ENCODE measurements at regions of chr1 and their contacts with region 1.

Region 1: DNA sequence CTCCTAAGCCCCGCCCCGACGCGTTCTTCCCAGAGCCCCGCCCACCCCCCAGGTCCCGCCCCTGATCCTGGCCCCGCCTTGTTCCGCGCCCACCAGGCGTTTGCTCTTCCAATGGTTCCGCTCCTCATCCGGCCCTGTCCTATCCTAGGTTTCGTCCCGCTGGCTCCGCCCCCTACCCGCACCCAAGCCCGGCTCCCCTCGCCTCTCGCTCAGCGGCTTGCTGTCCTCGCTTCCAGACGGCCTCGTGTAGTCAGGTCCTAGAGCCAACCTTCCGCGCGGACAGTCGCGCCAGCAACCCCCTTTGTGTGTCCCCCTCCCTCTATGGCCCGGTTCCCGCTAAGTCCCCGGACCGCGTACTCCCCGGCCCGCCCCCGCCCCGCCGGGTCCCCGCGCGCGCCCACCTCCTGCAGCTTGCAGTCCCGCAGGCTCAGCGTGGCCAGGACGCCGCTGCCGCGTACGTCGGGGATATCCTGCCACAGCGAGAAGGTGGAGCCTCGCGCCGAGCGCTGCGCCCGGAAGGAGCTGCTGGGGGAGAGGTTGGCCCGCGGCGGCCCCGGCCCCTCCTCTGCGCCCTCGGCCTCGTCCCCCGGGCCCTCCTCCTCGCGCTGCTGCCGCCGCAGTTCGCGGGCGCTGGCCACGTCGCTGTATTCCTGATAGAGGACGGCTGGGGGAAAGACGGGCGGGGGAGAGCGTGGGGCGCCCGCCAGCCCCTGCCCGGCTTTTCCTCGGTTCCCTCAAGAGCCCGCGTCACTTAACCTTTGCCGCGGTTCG is 5.7 kb downstream of the ARHGEF19 start:
- DNase-seq: peak; percentile 85 to 95 (median 93)
- ATAC-seq: peak; percentile 94
- H3K4me3 ChIP-seq: peak overlapping the region; percentile 74
- H3K4me3 Mint-ChIP-seq: peak overlapping the region; percentile 83 to 95 (median 90)
- H3K27ac ChIP-seq: peak overlapping the region; percentile 81
- H3K27ac Mint-ChIP-seq: peak overlapping the region; percentile 87 to 98 (median 95)
- H3K4me1 ChIP-seq: peaks cover 9 to 15% of the 10 kb centered on the region in 2 donors
- H3K4me1 Mint-ChIP-seq: peaks cover 7 to 17% (median 13%) of the 10 kb centered on the region in 7 donors
- H3K27me3 ChIP-seq: no peaks in the 10 kb centered on the region
- H3K27me3 Mint-ChIP-seq: no peaks in the 10 kb centered on the region

Region 2: DNA sequence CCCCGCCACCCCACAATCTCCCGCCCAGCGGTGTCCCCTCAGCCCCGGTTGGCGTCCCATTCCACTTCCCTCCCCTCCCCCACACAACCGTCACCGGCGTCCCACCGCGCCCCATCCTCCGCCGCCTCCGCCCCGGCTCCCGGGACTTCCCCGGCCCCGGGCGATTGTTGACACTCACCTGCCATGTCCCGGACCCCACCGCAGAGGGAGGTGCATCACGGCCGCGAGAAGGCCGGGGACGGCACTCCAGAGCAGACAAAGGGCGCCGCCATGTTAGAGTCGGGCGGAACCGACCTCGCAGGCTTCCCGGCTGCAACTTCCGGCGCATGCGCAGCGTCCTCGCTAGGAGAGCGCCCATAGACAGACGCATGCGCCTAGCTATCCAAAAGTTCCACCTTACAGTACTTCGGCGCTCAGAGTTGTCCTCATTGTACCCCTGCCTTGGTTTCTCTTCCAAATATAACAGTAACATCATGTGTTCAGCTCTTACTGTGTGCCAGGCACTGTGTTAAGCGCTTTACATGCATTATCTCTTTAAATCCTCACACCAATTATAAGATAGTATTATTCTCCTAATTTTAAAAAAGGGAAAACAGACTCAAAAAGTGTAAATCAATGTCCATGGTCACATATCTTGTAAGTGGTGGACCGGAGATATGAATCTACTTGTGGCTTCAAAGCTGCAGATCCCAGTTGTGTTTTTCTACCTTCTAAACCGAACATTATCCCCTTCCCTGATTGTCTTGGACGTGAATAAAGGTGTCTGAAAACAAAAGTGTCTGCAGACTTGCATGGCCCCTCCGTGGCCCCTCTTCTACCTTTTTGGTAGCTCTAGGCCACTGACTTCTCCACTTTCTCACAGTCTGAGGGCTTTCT is 230.7 kb before region 1 on chr1 and contains the start of gene ZBTB17:
- CTCF ChIA-PET with region 1: no interaction called
- POLR2A ChIA-PET with region 1: no interaction called
- intact Hi-C with region 1: loop called in 1 of 2 experiments (anchors 5 kb)
- DNase-seq: peak; percentile 90 to 95 (median 94)
- ATAC-seq: peak; percentile 96
- H3K4me3 ChIP-seq: peak within 1 kb of the TSS; percentile 76
- H3K4me3 Mint-ChIP-seq: peak within 1 kb of the TSS; percentile 82 to 94 (median 90)
- H3K27ac ChIP-seq: peak within 1 kb of the TSS; percentile 83
- H3K27ac Mint-ChIP-seq: peak within 1 kb of the TSS; percentile 82 to 95 (median 92)
- H3K4me1 ChIP-seq: peaks cover 12 to 17% of the 10 kb centered on the region in 2 donors
- H3K4me1 Mint-ChIP-seq: peaks cover 21 to 46% (median 38%) of the 10 kb centered on the region in 7 donors
- H3K27me3 ChIP-seq: no peaks in the 10 kb centered on the region
- H3K27me3 Mint-ChIP-seq: no peaks in the 10 kb centered on the region
- total RNA-seq, gene ZBTB17: 47.3 to 85.1 (median 65.0) TPM

Region 3: DNA sequence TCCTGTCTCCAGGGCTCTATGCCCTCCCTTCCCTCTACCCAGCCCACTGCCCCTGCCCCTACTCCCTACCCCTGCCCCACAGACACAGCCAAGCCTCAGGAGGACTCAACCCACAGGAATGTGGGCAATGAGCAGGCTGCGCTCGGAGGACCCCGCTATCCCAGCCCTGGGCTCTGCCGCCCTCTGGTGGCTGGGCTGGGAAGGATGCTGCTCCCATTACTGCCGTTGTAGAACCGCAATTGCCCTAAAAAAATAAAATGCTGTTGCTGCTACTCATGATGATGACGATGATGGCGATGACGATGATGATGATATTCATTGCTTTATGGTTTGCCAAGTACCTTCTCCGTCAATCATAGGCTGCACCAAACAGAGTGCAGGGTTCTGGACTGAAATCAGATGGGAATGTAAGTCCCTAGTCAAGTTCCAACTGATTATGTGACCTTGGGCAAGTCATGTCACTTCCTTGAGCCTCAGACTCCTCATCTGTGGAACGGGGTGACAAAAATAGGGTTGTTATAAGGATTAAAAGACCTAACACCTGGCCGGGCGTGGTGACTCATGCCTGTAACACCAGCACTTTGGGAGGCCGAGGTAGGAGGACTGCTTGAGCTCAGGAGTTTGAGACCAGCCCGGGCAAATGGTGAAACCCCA is 18.9 kb before region 1 on chr1:
- CTCF ChIA-PET with region 1: no interaction called
- POLR2A ChIA-PET with region 1: no interaction called
- intact Hi-C with region 1: no loop called
- DNase-seq: peak; percentile 59 to 87 (median 75)
- ATAC-seq: peak; percentile 94
- H3K4me3 ChIP-seq: no peak overlapping the region
- H3K4me3 Mint-ChIP-seq: no peak overlapping the region
- H3K27ac ChIP-seq: no peak overlapping the region
- H3K27ac Mint-ChIP-seq: no peak overlapping the region
- H3K4me1 ChIP-seq: peaks cover 0 to 4% of the 10 kb centered on the region in 2 donors
- H3K4me1 Mint-ChIP-seq: peaks cover 0 to 7% (median 0%) of the 10 kb centered on the region in 7 donors
- H3K27me3 ChIP-seq: no peaks in the 10 kb centered on the region
- H3K27me3 Mint-ChIP-seq: peaks cover 0 to 13% (median 0%) of the 10 kb centered on the region in 5 donors

Region 4: GRCh38 chr1:16217061-16217785 is 10.5 kb after region 1 on chr1:
- CTCF ChIA-PET with region 1: interaction called, 3 read pairs
- POLR2A ChIA-PET with region 1: interaction called, 17 read pairs
- intact Hi-C with region 1: loop called (anchors 1 kb)
- DNase-seq: peak; percentile 80 to 94 (median 89)
- ATAC-seq: peak; percentile 99
- H3K4me3 ChIP-seq: peak overlapping the region; percentile 67
- H3K4me3 Mint-ChIP-seq: peak overlapping the region; percentile 81 to 91 (median 88)
- H3K27ac ChIP-seq: peak overlapping the region; percentile 54
- H3K27ac Mint-ChIP-seq: peak overlapping the region in 8 of 9 donors; percentile 33 to 82 (median 68)
- H3K4me1 ChIP-seq: peaks cover 0 to 6% of the 10 kb centered on the region in 2 donors
- H3K4me1 Mint-ChIP-seq: peaks cover 9 to 30% (median 23%) of the 10 kb centered on the region in 7 donors
- H3K27me3 ChIP-seq: no peaks in the 10 kb centered on the region
- H3K27me3 Mint-ChIP-seq: peaks cover 0 to 11% (median 0%) of the 10 kb centered on the region in 5 donors

Region 5: GRCh38 chr1:16254263-16254928 is 47.7 kb after region 1 on chr1:
- CTCF ChIA-PET with region 1: no interaction called
- POLR2A ChIA-PET with region 1: no interaction called
- intact Hi-C with region 1: no loop called
- DNase-seq: no peak
- ATAC-seq: no peak
- H3K4me3 ChIP-seq: no peak overlapping the region
- H3K4me3 Mint-ChIP-seq: no peak overlapping the region
- H3K27ac ChIP-seq: no peak overlapping the region
- H3K27ac Mint-ChIP-seq: peak overlapping the region in 5 of 9 donors; percentile 32 to 77 (median 41)
- H3K4me1 ChIP-seq: peaks cover 0 to 5% of the 10 kb centered on the region in 2 donors
- H3K4me1 Mint-ChIP-seq: peaks cover 7 to 27% (median 9%) of the 10 kb centered on the region in 7 donors
- H3K27me3 ChIP-seq: no peaks in the 10 kb centered on the region
- H3K27me3 Mint-ChIP-seq: no peaks in the 10 kb centered on the region

Region 6: DNA sequence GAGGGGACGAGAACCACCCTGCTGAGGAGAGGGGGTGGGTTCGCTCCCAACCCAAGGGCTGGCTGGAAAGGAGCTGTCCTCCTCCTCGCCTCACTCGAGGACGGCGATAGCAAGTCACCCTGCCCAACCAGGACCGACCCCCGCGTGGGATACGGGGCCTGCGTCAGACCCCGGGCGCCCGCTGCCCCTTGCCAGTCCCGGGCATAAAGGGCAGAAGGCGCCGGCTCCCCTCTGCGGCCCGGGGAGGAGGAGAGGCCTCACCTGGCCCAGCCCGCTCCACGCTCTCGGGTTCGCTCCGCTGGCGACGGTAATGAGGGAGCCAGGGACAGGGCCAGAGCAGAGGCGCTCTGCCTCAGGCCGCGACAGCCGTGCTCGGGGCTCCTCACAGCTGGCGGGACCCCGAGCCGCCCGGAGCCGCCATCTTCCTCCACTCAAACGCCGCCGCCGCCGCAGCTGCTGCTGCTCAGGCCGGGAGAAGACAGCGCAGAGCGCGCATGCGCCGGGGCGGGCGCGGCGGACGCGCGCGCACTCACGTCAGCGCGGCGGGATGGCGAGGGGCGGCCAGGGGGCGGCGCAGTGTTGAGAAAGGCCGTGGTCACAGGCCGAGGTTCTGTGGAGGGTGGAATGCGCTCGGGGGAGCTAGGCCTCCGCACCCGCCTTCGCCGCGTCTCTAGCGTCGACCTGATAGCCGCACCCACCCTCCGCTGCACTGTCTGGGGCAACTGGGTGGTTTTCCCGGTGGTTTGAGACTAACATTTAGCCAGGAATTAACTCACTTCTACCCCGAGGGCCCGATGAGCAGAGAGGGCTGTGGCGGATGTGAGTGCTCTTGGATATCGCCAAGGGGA is 145.5 kb after region 1 on chr1 and contains the start of gene FBXO42:
- CTCF ChIA-PET with region 1: no interaction called
- POLR2A ChIA-PET with region 1: no interaction called
- intact Hi-C with region 1: loop called (anchors 2 to 5 kb)
- DNase-seq: peak; percentile 88 to 96 (median 94)
- ATAC-seq: peak; percentile 95
- H3K4me3 ChIP-seq: peak within 1 kb of the TSS; percentile 71
- H3K4me3 Mint-ChIP-seq: peak within 1 kb of the TSS; percentile 84 to 98 (median 94)
- H3K27ac ChIP-seq: peak within 1 kb of the TSS; percentile 97
- H3K27ac Mint-ChIP-seq: peak within 1 kb of the TSS; percentile 69 to 98 (median 94)
- H3K4me1 ChIP-seq: peaks cover 10 to 24% of the 10 kb centered on the region in 2 donors
- H3K4me1 Mint-ChIP-seq: peaks cover 17 to 44% (median 34%) of the 10 kb centered on the region in 7 donors
- H3K27me3 ChIP-seq: no peaks in the 10 kb centered on the region
- H3K27me3 Mint-ChIP-seq: no peaks in the 10 kb centered on the region
- total RNA-seq, gene FBXO42: 18.7 to 25.7 (median 24.6) TPM

Region 7: DNA sequence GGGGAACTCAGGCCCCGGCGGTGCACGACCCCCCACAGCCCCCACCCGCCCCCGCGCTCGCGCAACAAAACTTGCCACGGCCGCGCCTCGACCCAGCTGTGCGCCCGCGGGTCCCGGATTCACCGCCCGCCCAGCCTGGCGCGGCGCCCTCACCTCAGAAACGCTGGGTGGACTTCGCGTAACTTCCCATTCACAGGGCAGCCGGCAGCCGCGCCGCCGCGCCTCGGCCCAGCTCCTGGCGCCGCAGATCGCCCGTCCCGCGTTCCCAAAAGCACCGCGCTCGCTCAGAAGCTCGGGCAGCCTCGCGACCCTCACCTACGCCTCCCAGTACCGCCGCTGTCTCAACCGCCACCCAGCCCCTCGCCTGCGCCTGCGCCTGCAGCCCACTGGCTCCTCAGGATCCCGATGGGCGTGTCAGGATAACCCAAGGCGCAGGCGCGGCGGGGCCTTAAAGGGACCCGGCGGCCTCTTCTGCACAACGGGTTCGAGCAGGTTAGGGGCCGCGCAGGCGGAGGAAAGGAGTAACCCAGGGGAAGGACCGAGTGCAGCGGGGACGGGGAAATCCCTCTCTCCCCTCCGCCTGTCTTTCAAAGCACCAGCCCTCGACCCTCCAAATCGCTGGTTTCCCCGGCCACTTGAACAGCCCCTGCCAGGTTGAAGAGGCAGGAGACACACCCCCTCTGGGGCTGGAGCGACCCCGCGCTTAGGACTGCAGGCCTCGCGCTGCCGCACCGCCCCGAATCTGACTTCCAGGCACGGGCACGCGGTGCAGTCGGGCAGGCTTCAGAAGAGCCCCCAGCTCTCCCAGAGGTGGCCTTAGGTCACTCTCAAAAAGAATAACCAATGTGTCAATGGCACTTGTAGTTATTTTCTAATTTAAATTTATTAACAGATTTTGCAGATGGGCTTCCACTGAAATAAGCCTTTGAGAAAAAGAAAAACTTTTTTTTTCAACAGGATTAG is 406.7 kb after region 1 on chr1 and contains the start of gene NBPF1:
- CTCF ChIA-PET with region 1: no interaction called
- POLR2A ChIA-PET with region 1: no interaction called
- intact Hi-C with region 1: loop called in 1 of 2 experiments (anchors 10 kb)
- DNase-seq: peak; percentile 79 to 97 (median 87)
- ATAC-seq: peak; percentile 93
- H3K4me3 ChIP-seq: peak within 1 kb of the TSS; percentile 72
- H3K4me3 Mint-ChIP-seq: no peak within 1 kb of the TSS
- H3K27ac ChIP-seq: peak within 1 kb of the TSS; percentile 70
- H3K27ac Mint-ChIP-seq: no peak within 1 kb of the TSS
- H3K4me1 ChIP-seq: peaks cover 15 to 16% of the 10 kb centered on the region in 2 donors
- H3K4me1 Mint-ChIP-seq: no peaks in the 10 kb centered on the region
- H3K27me3 ChIP-seq: no peaks in the 10 kb centered on the region
- H3K27me3 Mint-ChIP-seq: no peaks in the 10 kb centered on the region
- total RNA-seq, gene NBPF1: 7.0 to 25.7 (median 20.7) TPM

Measured in naive thymus-derived CD4-positive, alpha-beta T cell (primary cell).